Left cardiac atrium (tissue), 4 donors: ENCODE measurements at regions of chr5 and their contacts with region 1.

Region 1: DNA sequence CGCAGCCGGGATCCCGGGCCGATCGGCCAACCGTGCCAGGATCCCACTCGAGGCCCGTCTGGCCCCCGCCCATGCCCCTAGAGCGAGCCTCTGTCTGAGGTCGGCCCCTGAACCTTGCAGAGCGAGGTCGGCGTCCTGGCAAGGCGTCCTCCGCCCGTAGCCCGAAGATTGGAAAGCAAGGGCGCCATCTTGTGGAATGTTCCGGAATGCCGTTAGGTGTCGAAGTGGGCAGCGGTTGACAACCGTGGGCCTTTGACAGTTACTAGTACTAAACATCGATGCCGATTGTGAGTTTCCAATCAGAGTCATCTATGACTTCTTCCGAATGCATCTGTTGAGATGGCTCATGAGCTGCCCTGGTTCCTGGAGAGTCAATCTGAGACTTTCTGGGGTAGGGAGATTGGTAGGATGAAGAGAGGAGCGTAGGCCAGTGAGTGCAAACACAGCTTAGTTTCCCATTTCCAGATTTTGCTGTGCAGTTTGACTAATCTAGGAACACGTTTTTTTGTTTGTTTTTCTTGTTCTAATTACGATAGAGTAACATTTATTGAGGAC is 923 bp upstream of the PLK2 start:
- DNase-seq: peak; percentile 93
- ATAC-seq: peak; percentile 81 to 87

Region 2: DNA sequence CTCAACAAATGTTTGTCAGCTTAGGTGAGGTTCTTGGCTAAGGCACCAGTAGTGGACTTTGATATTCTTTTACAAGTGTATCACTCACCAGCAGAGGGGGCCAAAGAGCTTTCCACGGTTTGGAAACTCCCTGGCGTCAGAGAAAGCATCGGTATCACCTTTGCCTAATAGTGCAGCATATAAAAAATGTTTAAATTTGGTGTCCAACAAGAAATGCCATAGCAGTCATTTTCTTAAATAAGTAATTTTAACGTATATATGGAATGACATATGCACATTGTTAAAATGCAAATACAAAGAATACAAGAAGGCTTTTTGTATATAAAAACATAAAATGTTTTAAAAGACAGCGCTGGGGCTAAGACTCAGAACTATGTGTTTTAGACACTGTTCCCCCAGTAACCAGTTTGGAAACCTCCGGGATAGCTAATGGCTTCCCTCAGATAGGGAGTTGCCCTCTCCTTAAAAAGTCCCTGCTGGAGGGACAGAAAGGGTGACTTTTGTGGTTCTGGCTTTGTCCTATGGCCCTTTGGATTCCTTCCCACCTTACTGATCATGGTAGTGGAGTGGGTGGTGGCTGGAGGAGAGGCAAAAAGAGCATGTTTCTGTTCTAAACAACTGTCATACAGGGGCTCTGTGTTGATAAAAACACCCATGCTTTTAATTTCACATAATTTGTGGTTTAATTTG is 1162.4 kb before region 1 on chr5:
- intact Hi-C with region 1: loop called (anchors 2 to 5 kb)
- DNase-seq: peak; percentile 84
- ATAC-seq: peak; percentile 90 to 94

Region 3: GRCh38 chr5:57779383-57780223 is 681.2 kb before region 1 on chr5:
- intact Hi-C with region 1: loop called (anchors 1 to 2 kb)
- DNase-seq: no peak
- ATAC-seq: peak; percentile 83 to 87

Region 4: GRCh38 chr5:57937025-57937424 is 523.8 kb before region 1 on chr5:
- intact Hi-C with region 1: loop called in 1 of 2 experiments (anchors 5 kb)
- DNase-seq: no peak
- ATAC-seq: peak in 1 of 2 donors; percentile 21

Region 5: GRCh38 chr5:58259685-58260152 is 201.1 kb before region 1 on chr5:
- intact Hi-C with region 1: loop called in 1 of 2 experiments (anchors 10 kb)
- DNase-seq: no peak
- ATAC-seq: peak; percentile 50 to 77

Region 6: GRCh38 chr5:58407042-58407719 is 53.6 kb before region 1 on chr5:
- intact Hi-C with region 1: loop called in 1 of 2 experiments (anchors 10 kb)
- DNase-seq: no peak
- ATAC-seq: peak in 1 of 2 donors; percentile 25